Endothelial cell of umbilical vein (primary cell): ENCODE measurements at regions of chr2 and their contacts with region 1.

Region 1: DNA sequence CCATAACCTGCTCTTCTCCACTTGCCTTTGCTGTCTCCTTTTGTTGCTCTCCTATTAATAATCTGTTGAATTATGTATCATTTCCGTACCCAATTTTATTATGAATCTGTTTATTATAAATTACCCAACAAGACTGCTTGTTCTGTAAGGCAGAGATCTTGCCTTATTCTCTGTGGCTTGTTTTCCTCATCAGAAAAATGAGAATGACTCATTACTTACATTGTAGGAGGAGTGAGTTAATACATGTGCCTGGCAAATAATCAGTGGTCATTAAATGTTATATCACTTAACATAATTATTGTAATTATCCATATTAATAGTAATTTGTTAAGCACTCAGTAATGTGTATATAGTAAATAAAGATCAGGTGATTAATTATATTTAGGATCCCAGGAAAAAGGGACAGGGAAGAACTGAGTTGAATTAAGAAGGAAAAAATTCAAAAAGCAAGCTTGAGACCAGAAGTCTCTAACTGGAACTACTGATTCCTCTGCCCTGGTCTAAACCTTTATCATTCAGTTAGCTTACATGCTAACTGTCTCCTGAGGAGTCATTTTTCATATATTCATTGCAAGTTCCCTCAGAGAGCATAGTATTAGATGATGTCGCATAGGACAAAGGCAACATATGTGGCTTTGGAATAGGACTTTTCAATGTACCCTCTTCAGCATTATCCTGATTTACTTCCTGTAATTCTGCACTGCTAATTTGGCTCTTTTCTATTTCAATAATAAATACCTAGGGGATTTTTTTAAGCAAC is 335.7 kb downstream of the GALNT13 start:
- DNase-seq: no peak
- H3K4me3 ChIP-seq: no peak overlapping the region
- H3K27ac ChIP-seq: no peak overlapping the region
- H3K4me1 ChIP-seq: no peaks in the 10 kb centered on the region
- H3K27me3 ChIP-seq: no peaks in the 10 kb centered on the region
- CTCF ChIP-seq: no peak
- POLR2A ChIP-seq: no peak

Region 2: GRCh38 chr2:154223726-154224125 is 16.3 kb after region 1 on chr2:
- CTCF ChIA-PET with region 1: no interaction called
- POLR2A ChIA-PET with region 1: no interaction called
- dilution Hi-C with region 1: no loop called
- intact Hi-C with region 1: loop called (anchors 1 kb)
- DNase-seq: no peak
- H3K4me3 ChIP-seq: no peak overlapping the region
- H3K27ac ChIP-seq: no peak overlapping the region
- H3K4me1 ChIP-seq: peaks cover 1% of the 10 kb centered on the region
- H3K27me3 ChIP-seq: no peaks in the 10 kb centered on the region
- CTCF ChIP-seq: no peak
- POLR2A ChIP-seq: no peak

Region 3: DNA sequence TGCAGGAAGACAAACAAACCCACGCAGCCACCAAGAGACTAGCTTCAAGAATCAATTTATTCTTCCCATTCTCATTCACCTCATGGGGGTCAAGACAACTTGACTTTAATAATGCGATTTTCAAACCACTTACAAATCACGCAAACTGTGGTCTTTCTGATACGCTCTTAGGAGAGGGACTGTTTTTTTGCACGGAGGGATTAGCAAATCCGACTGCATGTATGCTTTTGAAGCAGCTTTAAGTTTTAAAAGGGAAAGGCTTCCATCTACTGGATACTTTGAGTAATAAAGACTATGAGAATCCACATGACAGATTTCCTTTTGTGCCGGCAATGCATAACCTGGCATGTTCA is 168.1 kb after region 1 on chr2:
- CTCF ChIA-PET with region 1: no interaction called
- POLR2A ChIA-PET with region 1: no interaction called
- dilution Hi-C with region 1: no loop called
- intact Hi-C with region 1: no loop called
- DNase-seq: peak; percentile 46
- H3K4me3 ChIP-seq: no peak overlapping the region
- H3K27ac ChIP-seq: no peak overlapping the region
- H3K4me1 ChIP-seq: no peaks in the 10 kb centered on the region
- H3K27me3 ChIP-seq: no peaks in the 10 kb centered on the region
- CTCF ChIP-seq: peak in 1 of 2 donors; percentile 16
- POLR2A ChIP-seq: no peak